ENCODE measurements at regions of chr12 and their contacts with region 1.

Region 1: DNA sequence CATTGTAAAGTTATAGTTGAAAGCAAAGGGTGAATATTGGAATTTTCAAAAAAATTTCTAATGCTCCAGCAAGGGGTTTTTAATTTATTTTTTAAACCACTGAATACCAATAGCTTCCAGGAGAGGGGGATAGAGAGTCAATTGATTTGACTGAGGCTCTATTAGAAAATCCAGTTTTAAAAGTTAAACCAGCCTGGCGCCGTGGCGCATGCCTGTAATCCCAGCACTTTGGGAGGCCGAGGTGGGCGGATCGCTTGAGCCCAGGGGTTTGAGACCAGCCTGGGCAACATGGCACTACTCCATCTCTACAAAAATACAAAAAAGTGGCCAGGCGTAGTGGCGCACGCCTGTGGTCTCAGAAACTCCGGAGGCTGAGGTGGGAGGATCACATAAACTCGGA is 150.1 kb downstream of the SLC38A4 start:
- DNase-seq: peak in 2 of 3 donors; percentile 28 to 29
- ATAC-seq: no peak
- H3K4me3 ChIP-seq: no peak overlapping the region
- H3K4me1 ChIP-seq: no peaks in the 10 kb centered on the region
- CTCF ChIP-seq: peak; percentile 25

Region 2: DNA sequence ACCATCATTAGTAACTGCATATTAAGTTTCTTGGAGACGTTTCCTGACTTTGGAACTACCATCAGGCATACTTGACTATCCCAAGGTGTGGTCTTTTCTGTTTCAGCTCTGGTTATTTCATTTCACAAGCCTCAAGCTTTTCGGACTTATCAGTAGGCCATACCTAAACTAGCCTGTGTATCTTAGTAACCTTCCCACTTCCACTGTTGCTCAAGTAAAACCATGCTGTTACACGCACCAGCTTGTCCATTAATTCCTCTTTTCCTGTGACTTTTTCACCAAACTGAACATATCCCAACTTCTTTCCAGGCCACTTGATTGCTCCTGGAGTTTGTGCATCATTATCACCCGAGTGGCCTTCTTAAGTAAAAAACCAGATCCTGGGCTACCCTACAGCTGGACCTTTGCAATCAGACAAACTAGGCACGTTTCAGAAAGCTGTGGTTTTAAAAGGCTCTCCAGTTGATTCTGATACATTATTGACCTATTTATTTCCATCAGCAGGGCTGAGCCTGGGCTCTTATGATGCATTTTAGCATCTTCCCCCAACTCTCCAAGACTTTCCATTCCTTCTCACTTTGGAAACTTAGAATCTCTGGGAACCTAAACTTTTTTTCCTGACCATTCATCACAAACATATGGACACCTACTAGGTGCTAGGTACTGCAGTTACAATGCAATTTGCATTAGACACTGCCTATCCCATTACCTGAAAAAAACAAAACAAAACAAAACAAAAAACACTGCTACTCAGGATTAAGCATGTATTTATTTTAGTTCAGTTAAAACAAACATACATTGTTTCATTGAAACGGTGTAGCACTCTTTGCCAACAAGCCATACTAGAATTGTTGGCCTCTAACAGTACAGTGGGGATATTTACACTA is 318.1 kb before region 1 on chr12:
- intact Hi-C with region 1: loop called in 1 of 2 experiments (anchors 10 kb)
- DNase-seq: no peak
- ATAC-seq: peak; percentile 38
- H3K4me3 ChIP-seq: no peak overlapping the region
- H3K4me1 ChIP-seq: no peaks in the 10 kb centered on the region
- CTCF ChIP-seq: no peak

Region 3: GRCh38 chr12:46711756-46712155 is 36.0 kb after region 1 on chr12:
- intact Hi-C with region 1: no loop called
- DNase-seq: no peak
- ATAC-seq: no peak
- H3K4me3 ChIP-seq: no peak overlapping the region
- H3K4me1 ChIP-seq: no peaks in the 10 kb centered on the region
- CTCF ChIP-seq: no peak

Region 4: DNA sequence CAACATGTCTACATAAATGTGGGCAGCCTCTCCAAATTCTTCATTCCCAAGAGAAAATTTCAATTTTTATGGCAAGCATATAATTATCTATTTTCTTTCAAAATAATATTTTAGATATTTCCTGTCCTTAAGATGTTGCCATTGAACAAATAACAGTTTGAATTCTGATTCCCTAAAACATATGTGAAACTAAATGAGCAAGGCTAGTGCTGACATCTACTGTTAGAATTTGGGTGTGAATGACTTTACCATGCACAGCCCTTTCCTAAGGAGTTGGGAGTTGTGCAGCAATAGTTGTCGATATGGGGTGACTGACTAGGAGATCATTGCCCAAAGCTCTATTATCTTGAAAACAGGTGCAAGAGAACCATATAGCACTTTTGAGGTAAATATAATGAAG is 258.2 kb after region 1 on chr12:
- intact Hi-C with region 1: loop called (anchors 5 kb)
- DNase-seq: peak in 1 of 3 donors; percentile 43
- ATAC-seq: peak; percentile 40
- H3K4me3 ChIP-seq: no peak overlapping the region
- H3K4me1 ChIP-seq: no peaks in the 10 kb centered on the region
- CTCF ChIP-seq: no peak

Measured in mucosa of descending colon (tissue), 3 donors.